AG04449 (cell line): ENCODE measurements at regions of chr3 and their contacts with region 1.

Region 1: GRCh38 chr3:197487908-197488391 is 67.8 kb downstream of the BDH1 start:
- DNase-seq: peak; percentile 93
- H3K4me3 ChIP-seq: no peak overlapping the region
- CTCF ChIP-seq: no peak

Region 2: GRCh38 chr3:197466586-197467399 is 21.2 kb before region 1 on chr3:
- CTCF ChIA-PET with region 1: interaction called, 6 read pairs
- POLR2A ChIA-PET with region 1: interaction called, 18 read pairs
- DNase-seq: no peak
- H3K4me3 ChIP-seq: peak overlapping the region; percentile 33
- CTCF ChIP-seq: no peak

Region 3: DNA sequence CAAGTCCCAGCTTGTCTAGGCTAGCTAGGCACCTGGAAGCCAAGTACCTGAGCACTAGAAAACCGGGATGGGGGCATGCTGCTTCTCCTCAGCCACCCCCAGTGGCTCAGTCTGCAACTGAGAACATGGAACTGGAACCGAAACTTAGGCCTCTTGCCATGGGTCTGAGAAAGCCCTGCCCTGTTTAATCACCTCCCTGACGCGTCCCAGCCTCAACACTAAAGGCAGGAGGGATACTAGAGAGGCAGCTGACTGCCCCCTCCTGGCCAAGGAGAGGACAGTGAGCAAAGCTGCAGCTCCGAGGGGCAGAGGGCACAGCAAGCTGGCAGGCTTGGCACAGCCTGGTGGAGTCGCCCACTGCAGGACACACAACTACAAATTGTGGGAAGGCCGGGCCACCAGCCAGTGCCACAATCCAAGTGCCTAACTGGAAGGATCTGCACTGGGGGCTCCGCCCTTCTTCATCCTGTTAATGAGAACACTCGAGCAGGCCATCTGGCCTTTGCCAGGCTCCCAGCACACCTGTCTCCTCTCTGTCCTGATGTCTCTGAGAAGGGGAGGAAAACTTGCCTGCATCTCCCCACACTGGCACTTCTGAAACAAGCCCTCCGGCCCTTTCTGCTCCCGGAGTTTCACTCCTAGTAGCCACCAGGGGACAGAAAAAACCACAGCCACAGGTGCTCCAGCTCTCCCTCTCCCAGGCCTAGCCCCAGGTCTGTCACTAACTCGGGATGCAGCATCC is 14.1 kb after region 1 on chr3:
- CTCF ChIA-PET with region 1: interaction called, 19 read pairs
- POLR2A ChIA-PET with region 1: interaction called, 3 read pairs
- DNase-seq: no peak
- H3K4me3 ChIP-seq: no peak overlapping the region
- CTCF ChIP-seq: peak; percentile 52